H1 (cell line): ENCODE measurements at regions of chr16 and their contacts with region 1.

Region 1: GRCh38 chr16:30429678-30430427 is at the start of gene DCTPP1:
- DNase-seq: peak; percentile 87 to 96
- H3K4me3 ChIP-seq: peak within 1 kb of the TSS; percentile 63 to 85 (median 80)
- H3K27ac ChIP-seq: peak within 1 kb of the TSS; percentile 34; the same call in 1 of the 2 replicates
- H3K4me1 ChIP-seq: peaks cover 0 to 6% (median 4%) of the 10 kb centered on the region in 4 experiments; a peak in 4 of 7 replicates
- H3K27me3 ChIP-seq: no peaks in the 10 kb centered on the region
- CTCF ChIP-seq: peak; percentile 73 to 82 (median 74)
- EP300 ChIP-seq: peak in 1 of 2 experiments; percentile 55; a peak in 1 of 3 replicates
- POLR2A ChIP-seq: peak in 1 of 2 experiments; percentile 47; a peak in 1 of 3 replicates
- RAD21 ChIP-seq: peak; percentile 46 to 54
- total RNA-seq, gene DCTPP1: 90.4 and 94.5 TPM in 2 replicates

Region 2: DNA sequence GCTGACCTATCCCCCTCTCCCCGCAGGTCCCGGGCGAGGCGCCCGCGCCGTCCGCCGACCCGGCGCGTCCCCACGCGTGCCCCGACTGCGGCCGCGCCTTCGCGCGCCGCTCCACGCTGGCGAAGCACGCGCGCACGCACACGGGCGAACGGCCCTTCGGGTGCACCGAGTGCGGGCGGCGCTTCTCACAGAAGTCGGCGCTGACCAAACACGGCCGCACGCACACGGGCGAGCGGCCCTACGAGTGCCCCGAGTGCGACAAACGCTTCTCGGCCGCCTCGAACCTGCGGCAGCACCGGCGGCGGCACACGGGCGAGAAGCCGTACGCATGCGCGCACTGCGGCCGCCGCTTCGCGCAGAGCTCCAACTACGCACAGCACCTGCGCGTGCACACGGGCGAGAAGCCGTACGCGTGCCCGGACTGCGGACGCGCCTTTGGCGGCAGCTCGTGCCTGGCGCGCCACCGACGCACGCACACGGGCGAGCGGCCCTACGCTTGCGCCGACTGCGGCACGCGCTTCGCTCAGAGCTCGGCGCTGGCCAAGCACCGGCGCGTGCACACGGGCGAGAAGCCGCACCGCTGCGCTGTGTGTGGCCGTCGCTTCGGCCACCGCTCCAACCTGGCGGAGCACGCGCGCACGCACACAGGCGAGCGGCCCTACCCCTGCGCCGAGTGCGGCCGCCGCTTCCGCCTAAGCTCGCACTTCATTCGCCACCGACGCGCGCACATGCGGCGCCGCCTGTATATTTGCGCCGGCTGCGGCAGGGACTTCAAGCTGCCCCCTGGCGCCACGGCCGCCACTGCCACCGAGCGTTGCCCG is 12.1 kb before region 1 on chr16:
- CTCF ChIA-PET with region 1: interaction called, 6 read pairs
- POLR2A ChIA-PET with region 1: interaction called, 13 read pairs
- DNase-seq: peak; percentile 86 to 94
- H3K4me3 ChIP-seq: peak overlapping the region; percentile 36 to 60 (median 50)
- H3K27ac ChIP-seq: no peak overlapping the region
- H3K4me1 ChIP-seq: peaks cover 3 to 6% (median 5%) of the 10 kb centered on the region in 4 experiments; a peak in 6 of 7 replicates
- H3K27me3 ChIP-seq: no peaks in the 10 kb centered on the region
- CTCF ChIP-seq: peak; percentile 21 to 37 (median 29); a peak in 2 of 4 replicates
- EP300 ChIP-seq: no peak
- POLR2A ChIP-seq: peak in 1 of 2 experiments; percentile 52; a peak in 1 of 3 replicates
- RAD21 ChIP-seq: peak; percentile 16 to 29; a peak in 2 of 4 replicates

Region 3: DNA sequence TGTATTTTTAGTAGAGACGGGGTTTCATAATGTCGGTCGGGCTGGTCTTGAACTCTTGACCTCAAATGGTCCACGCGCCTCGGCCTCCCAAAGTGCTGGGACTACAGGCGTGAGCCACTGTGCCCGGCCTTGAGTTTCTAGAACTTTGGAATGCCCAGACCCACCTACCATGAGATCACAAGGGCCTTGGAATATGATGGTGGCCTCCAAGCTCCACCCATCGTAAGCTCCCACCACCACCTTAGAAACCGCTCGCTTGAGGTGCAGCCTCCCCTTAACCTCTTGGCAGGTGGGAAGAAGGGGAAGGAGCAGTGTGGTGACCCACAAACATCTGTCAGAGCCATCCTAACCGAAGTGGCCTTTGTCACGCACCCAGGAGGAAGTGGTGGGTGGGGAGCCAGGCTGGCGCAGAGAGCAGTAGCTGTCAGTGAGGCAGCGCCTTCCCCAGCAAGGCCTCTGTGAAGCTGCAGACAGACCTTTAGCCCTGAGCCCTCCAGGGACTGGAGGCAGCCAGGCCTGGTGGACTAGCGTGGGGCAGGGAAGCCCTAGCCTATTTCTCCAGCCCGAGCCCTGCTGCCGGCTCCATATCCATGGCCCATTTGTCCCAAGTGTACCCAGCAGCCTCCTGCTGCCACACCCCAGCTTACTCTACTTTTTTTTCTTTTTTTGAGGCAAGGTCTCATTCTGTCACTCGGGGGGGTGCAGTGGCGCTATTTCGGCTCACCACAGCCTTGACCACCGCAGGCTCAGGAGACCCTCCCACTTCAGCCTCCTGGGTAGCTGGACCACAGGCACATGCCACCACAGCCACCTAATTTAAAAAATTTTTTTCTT is 28.9 kb after region 1 on chr16:
- CTCF ChIA-PET with region 1: interaction called, 11 read pairs
- POLR2A ChIA-PET with region 1: no interaction called
- DNase-seq: no peak
- H3K4me3 ChIP-seq: no peak overlapping the region
- H3K27ac ChIP-seq: no peak overlapping the region
- H3K4me1 ChIP-seq: no peaks in the 10 kb centered on the region
- H3K27me3 ChIP-seq: no peaks in the 10 kb centered on the region; a peak in 1 of 7 replicates
- CTCF ChIP-seq: no peak
- EP300 ChIP-seq: no peak
- POLR2A ChIP-seq: no peak
- RAD21 ChIP-seq: no peak

Region 4: GRCh38 chr16:30602616-30603277 is 172.9 kb after region 1 on chr16:
- CTCF ChIA-PET with region 1: interaction called, 12 read pairs
- POLR2A ChIA-PET with region 1: interaction called, 7 read pairs
- DNase-seq: no peak
- H3K4me3 ChIP-seq: no peak overlapping the region
- H3K27ac ChIP-seq: no peak overlapping the region
- H3K4me1 ChIP-seq: no peaks in the 10 kb centered on the region
- H3K27me3 ChIP-seq: no peaks in the 10 kb centered on the region
- CTCF ChIP-seq: no peak
- EP300 ChIP-seq: no peak
- POLR2A ChIP-seq: no peak
- RAD21 ChIP-seq: no peak

Region 5: GRCh38 chr16:30621765-30622164 is 191.9 kb after region 1 on chr16:
- CTCF ChIA-PET with region 1: interaction called, 13 read pairs
- POLR2A ChIA-PET with region 1: interaction called, 3 read pairs
- DNase-seq: no peak
- H3K4me3 ChIP-seq: no peak overlapping the region
- H3K27ac ChIP-seq: no peak overlapping the region
- H3K4me1 ChIP-seq: no peaks in the 10 kb centered on the region
- H3K27me3 ChIP-seq: no peaks in the 10 kb centered on the region; a peak in 2 of 7 replicates
- CTCF ChIP-seq: no peak
- EP300 ChIP-seq: no peak
- POLR2A ChIP-seq: no peak
- RAD21 ChIP-seq: no peak